Endothelial cell of umbilical vein (primary cell): ENCODE measurements at regions of chr1 and their contacts with region 1.

Region 1: GRCh38 chr1:39165049-39165448 is 39.4 kb upstream of the MACF1 start:
- DNase-seq: peak; percentile 45
- H3K4me3 ChIP-seq: no peak overlapping the region
- H3K27ac ChIP-seq: no peak overlapping the region
- H3K4me1 ChIP-seq: peaks cover 39% of the 10 kb centered on the region
- H3K27me3 ChIP-seq: no peaks in the 10 kb centered on the region
- CTCF ChIP-seq: no peak
- POLR2A ChIP-seq: no peak

Region 2: GRCh38 chr1:39142401-39143151 is 22.5 kb before region 1 on chr1:
- CTCF ChIA-PET with region 1: interaction called, 11 read pairs
- POLR2A ChIA-PET with region 1: no interaction called
- dilution Hi-C with region 1: no loop called
- intact Hi-C with region 1: no loop called
- DNase-seq: no peak
- H3K4me3 ChIP-seq: no peak overlapping the region
- H3K27ac ChIP-seq: no peak overlapping the region
- H3K4me1 ChIP-seq: peaks cover 13% of the 10 kb centered on the region
- H3K27me3 ChIP-seq: no peaks in the 10 kb centered on the region
- CTCF ChIP-seq: no peak
- POLR2A ChIP-seq: no peak

Region 3: DNA sequence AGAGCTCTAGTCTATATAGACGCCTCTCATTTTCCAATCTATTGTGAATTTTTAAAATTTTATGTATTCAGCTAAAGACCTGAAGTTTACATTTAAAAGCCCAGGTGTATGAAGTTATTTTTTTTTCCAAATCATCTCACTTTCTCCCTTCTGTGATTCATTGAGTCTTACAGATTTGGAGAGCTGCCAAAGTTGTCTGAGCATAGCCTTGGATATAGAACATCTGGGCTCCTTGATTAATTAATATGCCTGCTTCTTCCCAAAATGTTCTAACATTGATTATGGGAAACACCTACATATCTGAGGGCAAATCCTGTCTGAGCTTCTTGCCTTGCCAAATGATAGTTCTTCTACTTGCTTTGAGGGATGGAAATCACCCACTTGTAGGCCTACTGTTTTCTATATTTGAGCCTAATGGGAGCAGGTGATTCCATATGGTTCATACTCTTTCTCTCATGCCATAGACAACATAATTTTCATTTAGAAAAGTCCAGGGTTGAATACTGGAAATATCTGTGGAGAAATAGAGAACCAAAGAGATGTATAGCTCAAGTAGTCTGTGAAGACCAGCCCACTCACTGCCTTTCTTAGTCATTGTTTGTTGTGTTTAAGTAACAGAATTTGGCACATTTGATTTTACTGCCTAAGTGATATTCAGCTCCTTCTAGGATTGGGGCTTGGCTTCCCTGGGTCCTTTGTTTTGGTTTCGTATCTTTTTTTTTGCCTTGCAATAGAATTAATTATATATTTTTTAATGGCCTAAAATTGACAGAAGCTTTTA is 85.6 kb after region 1 on chr1:
- CTCF ChIA-PET with region 1: no interaction called
- POLR2A ChIA-PET with region 1: no interaction called
- dilution Hi-C with region 1: no loop called
- intact Hi-C with region 1: no loop called
- DNase-seq: no peak
- H3K4me3 ChIP-seq: no peak overlapping the region
- H3K27ac ChIP-seq: no peak overlapping the region
- H3K4me1 ChIP-seq: no peaks in the 10 kb centered on the region
- H3K27me3 ChIP-seq: no peaks in the 10 kb centered on the region
- CTCF ChIP-seq: no peak
- POLR2A ChIP-seq: no peak

Region 4: GRCh38 chr1:39282537-39283216 is 117.6 kb after region 1 on chr1:
- CTCF ChIA-PET with region 1: no interaction called
- POLR2A ChIA-PET with region 1: no interaction called
- dilution Hi-C with region 1: no loop called
- intact Hi-C with region 1: no loop called
- DNase-seq: no peak
- H3K4me3 ChIP-seq: no peak overlapping the region
- H3K27ac ChIP-seq: no peak overlapping the region
- H3K4me1 ChIP-seq: peaks cover 5% of the 10 kb centered on the region
- H3K27me3 ChIP-seq: no peaks in the 10 kb centered on the region
- CTCF ChIP-seq: no peak
- POLR2A ChIP-seq: no peak